ENCODE measurements at regions of chr4 and their contacts with region 1.

Region 1: DNA sequence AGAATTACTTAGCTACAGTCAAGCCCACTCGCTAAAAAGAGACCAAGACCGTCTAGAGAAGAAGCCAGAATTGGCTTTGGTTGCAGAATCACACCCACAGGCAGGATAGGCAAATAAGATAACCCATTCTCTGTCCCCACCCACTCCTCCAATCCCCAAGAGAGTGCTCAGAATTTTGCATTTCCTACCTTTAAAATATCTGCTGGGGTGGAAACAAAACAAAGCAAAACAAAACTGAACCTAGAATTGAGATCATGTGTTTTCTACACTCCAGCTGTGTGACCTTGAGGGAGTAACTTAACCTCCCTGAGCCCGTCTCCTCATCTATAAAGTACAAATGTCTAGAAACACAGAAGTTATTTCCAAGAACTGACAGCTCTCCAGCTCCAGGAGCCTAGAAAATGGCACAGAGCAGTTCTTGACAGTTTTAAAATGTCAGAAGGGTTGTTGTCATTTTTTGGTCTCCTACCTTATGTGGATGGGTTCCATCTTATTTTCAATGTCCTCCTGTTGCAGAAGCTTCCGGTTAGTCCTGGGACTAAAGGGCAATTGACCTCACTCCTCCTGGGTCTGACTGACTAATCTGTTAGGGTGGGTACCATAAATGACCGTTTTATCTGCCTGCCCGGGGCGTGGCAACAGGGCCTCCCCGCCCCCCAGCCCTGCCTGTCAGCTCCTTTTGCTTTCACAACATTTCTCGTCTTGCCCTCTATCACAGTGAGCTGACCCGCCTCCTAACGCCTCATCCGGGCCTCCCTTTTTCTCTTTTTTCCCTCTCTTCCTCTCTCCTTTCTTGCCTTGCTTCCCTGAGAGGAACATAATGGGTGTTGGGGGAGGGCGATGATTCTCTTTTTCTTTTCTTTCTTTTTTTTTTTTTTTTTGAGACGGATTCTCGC is 114.0 kb downstream of the RBM47 start:
- DNase-seq: peak; percentile 81 to 93 (median 84)
- ATAC-seq: peak; percentile 90
- H3K4me3 ChIP-seq: peak overlapping the region; percentile 34
- H3K27ac ChIP-seq: peak overlapping the region; percentile 73
- H3K4me1 ChIP-seq: peaks cover 6 to 22% of the 10 kb centered on the region in 2 experiments; a peak in 4 of 5 replicates
- H3K27me3 ChIP-seq: no peaks in the 10 kb centered on the region
- CTCF ChIP-seq: no peak
- EP300 ChIP-seq: peak; percentile 81
- POLR2A ChIP-seq: peak; percentile 71
- RAD21 ChIP-seq: no peak; a peak in 1 of 4 replicates

Region 2: DNA sequence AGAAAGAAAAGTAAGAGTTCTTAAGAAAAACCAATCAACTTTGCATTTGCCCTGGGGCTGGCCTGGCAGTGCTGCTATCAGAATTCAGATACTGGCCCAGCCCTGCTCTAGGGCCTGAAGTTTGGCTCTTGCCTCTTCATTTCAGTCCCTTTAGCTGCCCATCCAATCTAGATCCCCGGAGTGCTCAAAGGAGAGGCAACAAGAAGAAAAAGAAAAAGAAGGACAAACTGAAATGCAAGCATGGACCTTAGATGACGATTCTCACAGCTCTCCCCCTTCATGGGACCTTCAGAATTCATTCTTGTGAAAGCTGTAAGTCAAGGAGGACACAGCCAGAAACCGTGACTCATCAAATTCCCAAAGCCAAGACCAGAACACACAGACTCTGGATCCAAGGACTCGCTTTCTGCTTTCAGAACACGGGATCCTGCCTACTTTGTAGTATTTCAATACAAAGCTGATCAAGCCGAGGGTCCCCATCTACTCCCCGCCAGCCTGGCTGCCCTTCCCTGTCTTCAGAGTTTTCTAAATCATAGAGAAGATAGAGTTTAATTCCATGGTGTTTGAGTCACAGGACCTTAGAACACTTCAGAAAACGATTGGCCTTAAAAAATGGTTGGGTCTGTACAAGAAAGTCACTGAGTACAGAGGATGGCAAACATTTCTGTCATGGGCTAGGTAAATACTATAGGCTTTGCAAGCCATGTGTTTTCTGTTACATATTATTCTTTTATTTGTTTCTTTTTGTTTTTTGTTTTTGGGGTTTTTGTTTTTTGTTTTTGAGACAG is 10.4 kb after region 1 on chr4:
- CTCF ChIA-PET with region 1: no interaction called
- POLR2A ChIA-PET with region 1: interaction called, 25 read pairs
- in situ Hi-C with region 1: no loop called
- intact Hi-C with region 1: no loop called
- DNase-seq: peak; percentile 44 to 86 (median 54)
- ATAC-seq: peak; percentile 87
- H3K4me3 ChIP-seq: no peak overlapping the region
- H3K27ac ChIP-seq: peak overlapping the region; percentile 85
- H3K4me1 ChIP-seq: peaks cover 7 to 22% of the 10 kb centered on the region in 2 experiments
- H3K27me3 ChIP-seq: no peaks in the 10 kb centered on the region
- CTCF ChIP-seq: no peak
- EP300 ChIP-seq: peak; percentile 46; the same call in 1 of the 2 replicates
- POLR2A ChIP-seq: 0 out of 2 replicates have a peak, but pooled peaks have one; percentile 43
- RAD21 ChIP-seq: no peak

Region 3: DNA sequence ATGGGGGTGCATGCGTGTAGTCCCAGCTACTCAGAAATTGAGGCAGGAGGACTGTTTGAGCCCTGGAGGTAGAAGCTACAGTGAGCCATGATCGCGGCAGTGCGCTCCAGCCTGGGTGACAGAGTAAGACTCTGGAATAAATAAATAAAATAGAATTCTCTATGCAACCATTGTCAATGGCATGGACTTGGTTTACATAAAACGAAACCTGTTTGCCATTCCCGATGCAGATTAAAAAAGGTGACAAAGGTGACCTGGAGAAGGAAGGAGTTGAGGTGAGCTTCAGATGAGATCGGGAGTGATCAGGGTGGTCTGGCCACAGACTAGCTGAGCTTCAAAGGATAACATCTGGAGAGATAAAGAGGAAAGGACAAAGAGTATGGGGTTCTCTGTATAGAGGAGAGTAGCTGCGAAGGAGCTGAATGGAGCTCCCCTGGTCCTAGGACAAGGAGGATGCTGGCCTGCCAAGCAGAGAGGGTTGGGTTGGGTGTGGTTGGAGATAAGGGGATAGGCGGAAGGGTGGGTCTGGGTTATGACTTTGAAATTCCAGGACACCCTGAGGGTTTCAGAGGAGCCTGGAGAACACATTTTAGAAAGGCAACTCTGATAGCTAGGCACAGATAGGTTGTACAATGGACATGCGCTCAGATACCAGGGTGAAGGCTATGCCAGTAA is 15.5 kb after region 1 on chr4:
- CTCF ChIA-PET with region 1: no interaction called
- POLR2A ChIA-PET with region 1: interaction called, 25 read pairs
- in situ Hi-C with region 1: no loop called
- intact Hi-C with region 1: no loop called
- DNase-seq: peak; percentile 47 to 90 (median 66)
- ATAC-seq: peak; percentile 98
- H3K4me3 ChIP-seq: no peak overlapping the region
- H3K27ac ChIP-seq: peak overlapping the region; percentile 51
- H3K4me1 ChIP-seq: peaks cover 7 to 20% of the 10 kb centered on the region in 2 experiments
- H3K27me3 ChIP-seq: no peaks in the 10 kb centered on the region
- CTCF ChIP-seq: no peak; a peak in 1 of 6 replicates
- EP300 ChIP-seq: peak; percentile 74; the same call in 1 of the 2 replicates
- POLR2A ChIP-seq: no peak
- RAD21 ChIP-seq: no peak

Region 4: DNA sequence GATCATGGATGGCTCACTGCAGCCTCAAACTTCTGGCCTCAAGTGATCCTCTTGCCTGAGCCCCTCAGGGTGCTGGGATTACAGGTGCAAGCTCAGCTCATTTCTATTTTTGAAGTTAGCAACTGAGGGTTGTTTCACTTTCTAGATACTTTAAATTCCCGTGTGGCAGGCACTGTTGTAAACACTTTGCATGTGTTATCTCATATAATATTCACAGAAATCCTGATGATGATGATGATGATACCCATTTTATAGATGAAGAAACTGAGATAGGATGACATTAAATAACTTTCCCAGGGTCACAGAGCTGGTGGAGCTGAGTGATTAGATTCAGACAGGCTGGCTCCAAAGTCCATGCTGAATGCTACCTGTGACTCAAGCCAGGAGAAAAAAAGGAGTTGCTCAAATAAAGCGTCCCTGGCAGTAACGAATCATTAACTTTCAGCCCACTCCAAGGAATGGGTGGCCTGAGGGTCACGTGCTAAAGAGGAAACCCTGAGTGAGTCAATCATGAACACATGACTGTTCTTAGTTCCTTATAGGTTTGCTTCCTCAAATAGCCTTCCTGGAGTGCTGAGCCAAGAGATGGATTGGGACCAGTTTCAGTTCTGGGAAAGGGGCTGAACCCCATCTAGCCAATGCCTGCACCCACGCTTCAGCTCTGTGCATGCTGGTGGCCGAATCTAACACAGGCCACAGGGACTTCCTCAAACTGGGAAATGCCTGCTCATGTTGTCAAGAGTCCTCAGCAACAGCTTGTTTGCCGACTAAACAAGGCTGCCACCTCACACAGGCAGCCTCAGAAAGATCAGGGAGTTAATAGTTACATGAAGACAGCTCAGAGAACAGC is 61.2 kb after region 1 on chr4:
- CTCF ChIA-PET with region 1: no interaction called
- POLR2A ChIA-PET with region 1: no interaction called
- in situ Hi-C with region 1: no loop called
- intact Hi-C with region 1: no loop called
- DNase-seq: peak in 2 of 4 experiments; percentile 15 to 48
- ATAC-seq: peak; percentile 76
- H3K4me3 ChIP-seq: no peak overlapping the region
- H3K27ac ChIP-seq: no peak overlapping the region
- H3K4me1 ChIP-seq: peaks cover 5 to 14% of the 10 kb centered on the region in 2 experiments; a peak in 3 of 5 replicates
- H3K27me3 ChIP-seq: peaks cover 4 to 20% of the 10 kb centered on the region in 2 experiments; a peak in 4 of 5 replicates
- CTCF ChIP-seq: no peak
- EP300 ChIP-seq: no peak
- POLR2A ChIP-seq: no peak
- RAD21 ChIP-seq: no peak

Region 5: GRCh38 chr4:41784191-41784979 is 1268.7 kb after region 1 on chr4:
- CTCF ChIA-PET with region 1: no interaction called
- POLR2A ChIA-PET with region 1: no interaction called
- in situ Hi-C with region 1: no loop called
- intact Hi-C with region 1: no loop called
- DNase-seq: no peak
- ATAC-seq: no peak
- H3K4me3 ChIP-seq: no peak overlapping the region
- H3K27ac ChIP-seq: no peak overlapping the region
- H3K4me1 ChIP-seq: no peaks in the 10 kb centered on the region
- H3K27me3 ChIP-seq: no peaks in the 10 kb centered on the region
- CTCF ChIP-seq: no peak
- EP300 ChIP-seq: no peak
- POLR2A ChIP-seq: no peak
- RAD21 ChIP-seq: no peak